ENCODE measurements at regions of chr19 and their contacts with region 1.

Region 1: DNA sequence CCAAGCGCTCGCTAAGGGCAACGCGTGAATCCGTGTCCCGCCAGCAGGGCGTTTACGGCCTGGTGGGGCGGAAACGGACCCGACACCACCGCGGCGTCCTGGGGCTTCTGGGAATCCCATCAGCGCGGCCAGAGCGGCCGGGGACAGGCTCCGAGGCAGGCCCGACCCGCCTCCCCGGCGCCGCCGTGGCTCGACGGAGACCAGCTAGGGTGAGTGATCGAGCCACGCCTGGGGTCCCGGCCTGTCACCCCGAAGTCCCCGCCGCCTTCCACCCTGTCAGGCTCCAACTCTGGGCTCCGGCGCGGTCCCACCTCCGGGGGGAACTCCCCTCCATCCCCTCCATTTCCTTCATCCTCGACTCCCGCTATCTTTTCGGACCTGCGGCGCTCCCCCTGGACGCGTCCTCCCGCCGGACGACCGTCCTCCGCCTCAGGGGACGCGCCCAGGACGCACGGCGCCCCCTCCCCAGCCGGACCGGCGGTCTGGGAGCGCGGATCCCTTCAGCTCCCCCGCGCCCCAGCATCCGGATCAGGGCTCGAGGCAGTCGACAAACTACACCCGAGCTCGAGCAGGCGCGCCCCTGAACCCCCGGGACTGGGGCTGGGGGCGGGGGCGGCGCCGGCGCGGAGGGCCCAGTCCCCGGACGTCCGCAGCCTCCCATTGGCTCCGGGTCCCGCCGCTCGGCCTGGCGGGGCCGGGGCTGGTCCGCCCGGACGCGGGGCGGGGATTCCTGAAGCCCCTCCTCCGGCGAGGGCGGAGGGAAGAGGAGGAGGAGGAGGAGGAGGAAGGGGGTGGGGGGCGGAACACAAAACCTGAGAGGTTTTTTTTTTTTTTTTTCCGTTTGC is 638 bp upstream of the BICRA start:
- DNase-seq: peak; percentile 93 to 98 (median 96)
- H3K4me3 ChIP-seq: peak overlapping the region; percentile 52 to 89
- H3K4me3 Mint-ChIP-seq: peak overlapping the region; percentile 80 to 89 (median 83)
- H3K27ac ChIP-seq: peak overlapping the region; percentile 88
- H3K27ac Mint-ChIP-seq: peak overlapping the region; percentile 63 to 88 (median 77)
- H3K4me1 ChIP-seq: peaks cover 30% of the 10 kb centered on the region
- H3K4me1 Mint-ChIP-seq: peaks cover 17 to 36% (median 25%) of the 10 kb centered on the region in 4 donors
- H3K27me3 ChIP-seq: no peaks in the 10 kb centered on the region
- H3K27me3 Mint-ChIP-seq: no peaks in the 10 kb centered on the region

Region 2: DNA sequence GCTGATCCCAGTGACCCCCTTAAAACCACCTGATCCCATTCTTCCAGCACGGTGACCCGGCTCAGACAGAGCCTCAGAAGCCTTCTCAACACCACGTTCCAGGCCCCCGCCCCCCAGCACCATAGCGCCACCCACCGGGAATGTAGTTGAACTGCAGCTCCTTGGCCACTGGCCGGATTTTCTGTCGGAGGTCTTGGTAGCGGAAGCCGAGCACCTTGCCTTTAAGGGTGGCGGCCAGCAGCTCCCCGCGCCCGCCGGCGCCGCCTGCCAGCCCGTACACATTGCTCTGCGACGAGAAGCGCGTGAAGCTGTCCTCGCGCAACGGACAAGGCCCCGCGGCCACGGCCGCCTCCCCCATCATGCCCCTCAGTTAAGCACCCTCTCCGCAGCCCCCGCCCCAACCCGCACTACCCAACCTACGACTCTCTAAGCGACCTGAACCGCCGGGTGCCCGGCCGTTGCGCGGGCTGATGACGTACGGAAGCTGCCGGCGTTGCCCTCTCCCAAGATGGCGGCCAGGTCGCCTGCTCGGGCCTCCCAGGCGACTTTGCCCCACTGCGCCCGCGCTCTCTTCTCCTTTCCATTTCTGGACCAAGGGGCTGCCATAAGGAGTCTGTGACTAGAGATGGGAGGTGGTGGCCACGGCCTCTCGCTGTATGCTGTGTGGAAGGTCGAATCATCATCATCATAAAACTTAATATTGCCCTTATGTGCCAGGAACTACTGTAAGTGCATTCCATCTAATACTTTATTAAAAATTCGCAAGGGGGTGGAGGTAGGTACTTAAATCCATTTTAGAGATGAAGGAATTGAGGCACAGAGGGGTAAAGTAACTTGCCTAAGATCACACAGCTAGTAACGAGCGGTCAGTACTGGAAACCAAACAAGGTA is 124.3 kb before region 1 on chr19 and contains the start of gene KPTN:
- CTCF ChIA-PET with region 1: interaction called, 4 read pairs
- POLR2A ChIA-PET with region 1: interaction called, 14 read pairs
- intact Hi-C with region 1: no loop called
- DNase-seq: peak; percentile 87 to 92 (median 90)
- H3K4me3 ChIP-seq: peak within 1 kb of the TSS; percentile 44 to 72
- H3K4me3 Mint-ChIP-seq: peak within 1 kb of the TSS; percentile 91 to 100 (median 98)
- H3K27ac ChIP-seq: peak within 1 kb of the TSS; percentile 86
- H3K27ac Mint-ChIP-seq: peak within 1 kb of the TSS; percentile 96 to 100 (median 99)
- H3K4me1 ChIP-seq: peaks cover 21% of the 10 kb centered on the region
- H3K4me1 Mint-ChIP-seq: peaks cover 16 to 42% (median 22%) of the 10 kb centered on the region in 4 donors
- H3K27me3 ChIP-seq: no peaks in the 10 kb centered on the region
- H3K27me3 Mint-ChIP-seq: no peaks in the 10 kb centered on the region
- total RNA-seq, gene KPTN: 4.0 to 4.3 TPM

Region 3: GRCh38 chr19:47540728-47541127 is 67.6 kb before region 1 on chr19:
- CTCF ChIA-PET with region 1: no interaction called
- POLR2A ChIA-PET with region 1: no interaction called
- intact Hi-C with region 1: loop called (anchors 2 kb)
- DNase-seq: peak in 1 of 5 donors; percentile 15
- H3K4me3 ChIP-seq: no peak overlapping the region
- H3K4me3 Mint-ChIP-seq: peak overlapping the region in 3 of 8 donors; percentile 8 to 35 (median 20)
- H3K27ac ChIP-seq: no peak overlapping the region
- H3K27ac Mint-ChIP-seq: peak overlapping the region; percentile 29 to 96 (median 85)
- H3K4me1 ChIP-seq: peaks cover 12% of the 10 kb centered on the region
- H3K4me1 Mint-ChIP-seq: peaks cover 12 to 29% (median 19%) of the 10 kb centered on the region in 4 donors
- H3K27me3 ChIP-seq: no peaks in the 10 kb centered on the region
- H3K27me3 Mint-ChIP-seq: peaks cover 0 to 5% of the 10 kb centered on the region in 2 donors

Region 4: DNA sequence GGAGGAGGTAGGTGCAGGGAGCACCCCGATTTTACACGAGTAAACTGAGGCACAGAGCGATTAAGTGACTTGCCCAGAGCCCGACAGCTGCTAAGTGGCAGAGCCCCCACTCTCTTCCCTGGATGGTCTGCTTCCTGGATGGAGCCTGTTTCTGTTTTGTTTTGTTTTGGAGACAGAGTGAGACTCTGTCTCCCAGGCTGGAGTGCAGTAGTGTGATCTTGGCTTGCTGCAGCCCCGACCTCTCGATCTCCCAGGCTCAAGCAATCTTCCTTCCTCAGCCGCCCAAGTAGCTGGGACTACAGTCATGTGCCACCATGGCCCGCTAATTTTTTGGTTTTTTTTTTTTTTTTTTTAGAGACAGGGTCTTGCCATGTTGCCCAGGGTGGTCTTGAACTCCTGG is 17.9 kb after region 1 on chr19:
- CTCF ChIA-PET with region 1: interaction called, 3 read pairs
- POLR2A ChIA-PET with region 1: interaction called, 14 read pairs
- intact Hi-C with region 1: no loop called
- DNase-seq: no peak
- H3K4me3 ChIP-seq: no peak overlapping the region
- H3K4me3 Mint-ChIP-seq: no peak overlapping the region
- H3K27ac ChIP-seq: no peak overlapping the region
- H3K27ac Mint-ChIP-seq: peak overlapping the region in 3 of 7 donors; percentile 29 to 42 (median 30)
- H3K4me1 ChIP-seq: no peaks in the 10 kb centered on the region
- H3K4me1 Mint-ChIP-seq: peaks cover 30 to 65% (median 36%) of the 10 kb centered on the region in 4 donors
- H3K27me3 ChIP-seq: no peaks in the 10 kb centered on the region
- H3K27me3 Mint-ChIP-seq: no peaks in the 10 kb centered on the region

Measured in CD4-positive, alpha-beta memory T cell (primary cell).